ENCODE measurements at regions of chr12 and their contacts with region 1.

Region 1: DNA sequence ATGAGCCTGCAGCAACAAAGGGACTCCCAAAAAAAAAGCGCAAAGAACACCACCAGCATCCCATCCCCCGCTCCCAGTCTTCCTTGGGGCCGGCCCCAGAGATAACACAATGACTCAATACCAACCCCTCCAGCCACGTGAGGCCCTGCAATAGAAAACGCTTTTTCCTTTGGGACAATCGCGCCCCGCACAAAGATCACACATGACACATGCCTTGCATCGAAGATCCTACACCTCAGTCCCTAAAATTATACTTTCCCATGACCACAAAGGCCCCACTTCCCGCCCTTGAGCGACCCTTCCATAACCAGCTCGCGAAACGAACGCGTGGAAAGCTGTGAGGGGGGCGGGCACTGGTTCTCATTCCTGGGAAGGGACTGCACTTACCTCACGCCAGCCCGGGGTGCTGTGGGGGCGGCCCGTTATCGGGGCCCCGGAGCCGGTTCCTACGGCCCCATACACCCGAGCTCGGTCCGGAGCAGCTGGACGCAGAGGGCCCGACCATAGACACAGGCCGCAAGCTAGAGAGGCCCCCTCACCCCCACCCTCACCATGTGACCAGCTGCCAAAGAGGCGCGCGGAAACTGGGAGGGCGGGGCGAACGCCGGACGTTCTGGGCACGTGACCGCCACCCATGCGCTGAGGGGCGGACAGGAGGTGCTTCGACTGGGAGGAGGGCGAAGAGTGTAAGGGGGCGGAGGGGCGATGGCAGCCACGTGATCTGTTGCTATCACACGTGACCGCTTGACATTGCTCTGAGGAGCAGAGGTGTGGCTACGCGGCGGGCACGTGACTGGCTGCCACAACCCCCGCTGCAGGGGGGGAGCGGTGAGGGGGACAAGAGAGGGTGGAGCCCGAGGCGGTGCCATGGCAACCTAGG is at the start of gene CDK4:
- DNase-seq: peak; percentile 99 to 100
- H3K4me3 ChIP-seq: peak within 1 kb of the TSS; percentile 70 to 77
- H3K27ac ChIP-seq: peak within 1 kb of the TSS; percentile 89
- H3K4me1 ChIP-seq: peaks cover 2 to 17% of the 10 kb centered on the region in 2 donors
- H3K27me3 ChIP-seq: no peaks in the 10 kb centered on the region
- CTCF ChIP-seq: no peak
- total RNA-seq, gene CDK4: 82.6 TPM

Region 2: GRCh38 chr12:57771708-57772428 is 19.8 kb after region 1 on chr12 and contains the start of gene METTL1:
- intact Hi-C with region 1: loop called (anchors 1 kb)
- DNase-seq: peak; percentile 91 to 97
- H3K4me3 ChIP-seq: peak within 1 kb of the TSS; percentile 80 to 83
- H3K27ac ChIP-seq: peak within 1 kb of the TSS; percentile 90 to 94
- H3K4me1 ChIP-seq: peaks cover 2 to 17% of the 10 kb centered on the region in 2 donors
- H3K27me3 ChIP-seq: no peaks in the 10 kb centered on the region
- CTCF ChIP-seq: no peak
- total RNA-seq, gene METTL1: 29.8 TPM

Region 3: GRCh38 chr12:57888409-57889157 is 136.6 kb after region 1 on chr12:
- intact Hi-C with region 1: loop called (anchors 5 kb)
- DNase-seq: peak in 1 of 2 donors; percentile 85
- H3K4me3 ChIP-seq: peak overlapping the region; percentile 11 to 54
- H3K27ac ChIP-seq: peak overlapping the region; percentile 98 to 99
- H3K4me1 ChIP-seq: peaks cover 39 to 67% of the 10 kb centered on the region in 2 donors
- H3K27me3 ChIP-seq: no peaks in the 10 kb centered on the region
- CTCF ChIP-seq: no peak